ENCODE measurements at regions of chr11 and their contacts with region 1.

Region 1: GRCh38 chr11:3854977-3855807 is at the start of gene STIM1:
- DNase-seq: peak; percentile 51
- H3K4me3 ChIP-seq: peak within 1 kb of the TSS; percentile 77
- H3K27me3 ChIP-seq: no peaks in the 10 kb centered on the region
- CTCF ChIP-seq: peak; percentile 96
- polyA plus RNA-seq, gene STIM1: 24.4 and 54.6 TPM in 2 replicates

Region 2: DNA sequence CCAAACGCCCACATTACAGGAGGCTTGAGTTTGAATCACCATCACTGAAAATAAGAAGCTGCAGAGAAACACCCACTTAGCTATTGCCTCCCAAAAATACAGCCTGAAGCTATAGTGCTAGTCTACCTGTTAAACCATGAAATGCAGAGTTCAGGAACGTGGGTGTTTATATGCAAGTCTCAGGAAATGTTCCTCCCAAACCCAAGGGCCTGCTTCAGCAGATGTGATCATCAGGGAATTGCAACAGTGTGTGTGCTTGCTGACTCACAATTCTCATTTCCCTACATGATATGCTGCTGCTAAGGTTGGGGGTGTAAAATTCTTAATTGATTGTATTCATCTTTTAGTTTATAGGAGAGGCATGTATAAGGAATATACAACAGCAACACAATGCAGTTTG is 107.5 kb before region 1 on chr11:
- CTCF ChIA-PET with region 1: no interaction called
- POLR2A ChIA-PET with region 1: no interaction called
- DNase-seq: peak; percentile 53
- H3K4me3 ChIP-seq: no peak overlapping the region
- H3K27me3 ChIP-seq: no peaks in the 10 kb centered on the region
- CTCF ChIP-seq: no peak

Region 3: GRCh38 chr11:3841426-3842350 is 13.5 kb before region 1 on chr11:
- CTCF ChIA-PET with region 1: interaction called, 27 read pairs
- POLR2A ChIA-PET with region 1: interaction called, 3 read pairs
- DNase-seq: peak; percentile 34
- H3K4me3 ChIP-seq: peak overlapping the region; percentile 80
- H3K27me3 ChIP-seq: no peaks in the 10 kb centered on the region
- CTCF ChIP-seq: peak; percentile 94

Region 4: GRCh38 chr11:3896644-3897043 is 41.5 kb after region 1 on chr11:
- CTCF ChIA-PET with region 1: interaction called, 16 read pairs
- POLR2A ChIA-PET with region 1: no interaction called
- DNase-seq: no peak
- H3K4me3 ChIP-seq: no peak overlapping the region
- H3K27me3 ChIP-seq: no peaks in the 10 kb centered on the region
- CTCF ChIP-seq: no peak

Region 5: GRCh38 chr11:3950996-3951660 is 95.9 kb after region 1 on chr11:
- CTCF ChIA-PET with region 1: interaction called, 17 read pairs
- POLR2A ChIA-PET with region 1: no interaction called
- DNase-seq: no peak
- H3K4me3 ChIP-seq: no peak overlapping the region
- H3K27me3 ChIP-seq: no peaks in the 10 kb centered on the region
- CTCF ChIP-seq: no peak

Region 6: GRCh38 chr11:3969613-3970012 is 114.4 kb after region 1 on chr11:
- CTCF ChIA-PET with region 1: interaction called, 12 read pairs
- POLR2A ChIA-PET with region 1: no interaction called
- DNase-seq: no peak
- H3K4me3 ChIP-seq: no peak overlapping the region
- H3K27me3 ChIP-seq: no peaks in the 10 kb centered on the region
- CTCF ChIP-seq: no peak

Region 7: GRCh38 chr11:4025248-4025966 is 170.2 kb after region 1 on chr11:
- CTCF ChIA-PET with region 1: interaction called, 14 read pairs
- POLR2A ChIA-PET with region 1: no interaction called
- DNase-seq: no peak
- H3K4me3 ChIP-seq: no peak overlapping the region
- H3K27me3 ChIP-seq: no peaks in the 10 kb centered on the region
- CTCF ChIP-seq: no peak

Region 8: DNA sequence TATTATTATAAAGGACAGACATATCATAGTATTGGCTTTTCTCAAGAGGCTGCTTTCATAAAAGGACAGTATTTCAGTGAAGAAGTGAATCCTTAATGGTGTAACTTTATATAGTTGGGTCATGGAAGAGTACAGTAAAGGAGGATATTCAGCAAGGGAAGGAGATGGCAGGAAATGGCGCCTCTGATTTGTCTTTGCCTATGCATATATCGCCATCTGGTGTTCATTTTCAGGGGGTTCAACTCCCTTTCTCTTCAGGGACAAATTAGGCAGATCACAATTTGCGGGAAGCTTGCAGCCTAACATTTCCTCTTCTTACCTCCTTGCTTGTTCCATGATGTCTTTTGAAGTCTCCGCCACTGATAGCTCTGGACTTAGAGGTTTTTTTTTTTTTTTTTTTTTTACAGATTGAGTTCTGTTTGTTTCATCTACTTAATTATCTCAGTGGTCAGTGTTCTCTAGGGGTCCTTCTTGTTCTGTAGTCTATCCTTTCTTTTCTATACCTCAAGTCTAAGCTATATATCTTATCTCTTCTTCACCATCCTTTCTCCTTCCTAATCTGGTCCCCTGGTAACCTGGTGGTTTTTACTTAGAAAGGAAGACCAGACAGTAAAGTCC is 217.6 kb after region 1 on chr11:
- CTCF ChIA-PET with region 1: interaction called, 524 read pairs
- POLR2A ChIA-PET with region 1: no interaction called
- DNase-seq: no peak
- H3K4me3 ChIP-seq: no peak overlapping the region
- H3K27me3 ChIP-seq: no peaks in the 10 kb centered on the region
- CTCF ChIP-seq: peak; percentile 75